ENCODE measurements at regions of chr18 and their contacts with region 1.

Region 1: DNA sequence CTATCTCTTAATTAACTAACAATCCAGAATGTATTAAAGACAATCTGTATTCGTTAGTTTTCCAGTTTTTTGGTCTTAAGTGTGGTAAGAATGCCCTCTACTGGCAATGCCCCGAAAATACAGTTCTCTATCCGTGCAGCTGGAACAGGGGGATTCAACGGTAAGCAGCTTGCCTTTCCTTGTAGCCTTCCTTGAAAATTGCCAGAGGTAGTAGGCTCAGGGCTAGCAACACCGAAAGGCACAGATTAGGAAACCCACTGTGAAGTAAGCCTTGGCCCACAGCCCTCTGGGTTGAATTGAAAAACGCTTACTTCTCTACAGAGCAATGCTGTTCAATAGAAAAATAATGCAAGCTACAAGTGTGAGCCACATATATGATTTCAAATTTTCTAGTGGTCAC is 17.1 kb upstream of the VPS4B start:
- DNase-seq: peak; percentile 59
- ATAC-seq: peak; percentile 60
- H3K4me3 Mint-ChIP-seq: no peak overlapping the region
- H3K27ac Mint-ChIP-seq: no peak overlapping the region
- H3K4me1 Mint-ChIP-seq: peaks cover 3% of the 10 kb centered on the region
- H3K27me3 Mint-ChIP-seq: peaks cover 21% of the 10 kb centered on the region

Region 2: GRCh38 chr18:63131106-63131958 is 308.0 kb before region 1 on chr18:
- CTCF ChIA-PET with region 1: interaction called, 11 read pairs
- POLR2A ChIA-PET with region 1: no interaction called
- DNase-seq: peak; percentile 73
- ATAC-seq: peak; percentile 56
- H3K4me3 Mint-ChIP-seq: no peak overlapping the region
- H3K27ac Mint-ChIP-seq: peak overlapping the region; percentile 70
- H3K4me1 Mint-ChIP-seq: peaks cover 52% of the 10 kb centered on the region
- H3K27me3 Mint-ChIP-seq: no peaks in the 10 kb centered on the region

Region 3: GRCh38 chr18:63339920-63340484 is 99.3 kb before region 1 on chr18:
- CTCF ChIA-PET with region 1: interaction called, 55 read pairs
- POLR2A ChIA-PET with region 1: no interaction called
- DNase-seq: peak; percentile 71
- ATAC-seq: peak; percentile 64
- H3K4me3 Mint-ChIP-seq: no peak overlapping the region
- H3K27ac Mint-ChIP-seq: no peak overlapping the region
- H3K4me1 Mint-ChIP-seq: peaks cover 3% of the 10 kb centered on the region
- H3K27me3 Mint-ChIP-seq: no peaks in the 10 kb centered on the region

Region 4: DNA sequence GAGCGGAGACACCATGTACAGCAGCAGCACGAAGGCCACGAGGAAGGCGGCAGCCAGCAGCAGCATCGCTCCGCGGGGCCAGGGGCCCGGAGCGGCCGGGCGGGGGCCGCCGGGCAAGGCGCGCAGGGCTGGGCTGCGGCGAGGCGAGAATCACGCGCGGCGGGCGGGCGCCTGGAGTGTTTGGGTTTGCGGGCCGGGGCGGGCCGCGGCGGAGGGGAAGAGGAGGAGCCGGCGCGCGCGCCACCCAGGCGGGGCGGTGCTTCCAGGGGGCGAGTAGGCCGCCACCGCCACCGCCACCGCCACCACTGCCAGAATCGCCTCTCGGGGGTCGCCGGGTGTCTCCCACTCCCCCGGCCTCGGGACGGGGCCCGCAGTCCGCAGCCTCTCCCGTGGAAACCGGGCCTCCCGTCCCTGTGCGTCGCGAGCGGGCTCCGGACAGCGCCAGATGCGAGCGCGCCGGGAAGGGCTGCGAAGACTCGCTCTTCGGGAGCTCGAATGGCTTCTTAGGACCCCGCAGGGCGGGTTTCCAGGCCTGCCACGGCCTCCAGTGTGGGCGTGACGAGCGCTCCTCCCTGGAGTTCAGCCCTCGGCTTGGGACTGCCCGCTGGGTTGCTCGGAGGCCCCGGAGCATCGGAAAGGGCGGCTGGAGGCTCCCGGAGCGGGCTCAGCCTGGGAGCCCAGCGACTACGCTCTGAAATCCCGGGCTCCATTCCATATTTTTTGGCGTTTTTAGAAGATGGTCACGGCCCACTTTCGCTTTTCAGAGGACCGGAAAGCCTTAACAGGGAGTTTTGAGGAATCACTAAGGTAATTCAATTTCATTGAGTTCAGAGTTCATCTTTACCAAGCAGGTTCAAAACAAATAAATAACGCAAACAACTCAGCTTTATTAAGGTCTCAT is 72.0 kb before region 1 on chr18 and contains the start of gene KDSR:
- CTCF ChIA-PET with region 1: interaction called, 26 read pairs
- POLR2A ChIA-PET with region 1: interaction called, 4 read pairs
- DNase-seq: peak; percentile 86
- ATAC-seq: peak; percentile 88
- H3K4me3 Mint-ChIP-seq: peak within 1 kb of the TSS; percentile 81
- H3K27ac Mint-ChIP-seq: peak within 1 kb of the TSS; percentile 86
- H3K4me1 Mint-ChIP-seq: peaks cover 39% of the 10 kb centered on the region
- H3K27me3 Mint-ChIP-seq: no peaks in the 10 kb centered on the region
- total RNA-seq, gene KDSR: 38.2 to 38.4 TPM

Region 5: DNA sequence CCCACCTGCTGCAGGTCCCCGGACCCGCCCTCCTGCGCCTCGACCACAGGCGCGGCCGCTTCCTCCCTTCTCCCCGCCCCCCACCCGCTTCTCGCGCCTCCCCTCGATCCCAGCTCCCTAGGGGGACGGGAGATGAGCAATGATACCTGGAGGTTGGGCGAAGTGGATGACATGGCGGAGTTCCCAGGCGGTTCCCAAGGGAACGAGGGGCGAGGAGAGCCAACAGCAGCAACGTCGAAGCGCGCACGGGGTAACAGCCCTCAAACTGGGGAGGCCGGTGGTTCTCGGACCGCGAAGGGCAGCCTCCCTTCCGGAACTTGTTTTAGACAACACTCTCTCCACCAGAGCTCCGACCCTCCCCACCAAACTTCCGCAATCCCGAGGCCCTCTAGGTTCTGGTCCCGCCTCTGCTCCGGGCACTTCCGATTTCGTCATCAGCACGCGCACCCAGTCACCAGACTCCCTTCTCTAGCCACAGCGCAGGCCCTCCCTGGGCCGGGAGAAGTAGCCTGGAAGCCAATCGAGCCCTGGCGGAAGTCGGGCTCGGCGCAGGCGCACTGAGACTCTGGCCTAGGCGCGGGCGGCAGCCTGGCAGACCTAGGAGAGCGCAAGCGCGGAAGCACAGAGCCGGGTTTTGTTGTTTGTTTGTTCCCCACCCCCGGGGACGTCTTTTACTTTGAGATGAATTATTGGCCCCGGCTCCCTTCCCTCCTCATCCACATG is 17.1 kb before region 1 on chr18 and contains the start of gene VPS4B:
- CTCF ChIA-PET with region 1: interaction called, 45 read pairs
- POLR2A ChIA-PET with region 1: interaction called, 3 read pairs
- DNase-seq: peak; percentile 100
- ATAC-seq: peak; percentile 95
- H3K4me3 Mint-ChIP-seq: peak within 1 kb of the TSS; percentile 98
- H3K27ac Mint-ChIP-seq: peak within 1 kb of the TSS; percentile 98
- H3K4me1 Mint-ChIP-seq: peaks cover 23% of the 10 kb centered on the region
- H3K27me3 Mint-ChIP-seq: peaks cover 4% of the 10 kb centered on the region
- total RNA-seq, gene VPS4B: 62.8 to 67.2 TPM

Measured in activated CD8-positive, alpha-beta T cell treated with anti-CD3 and anti-CD28 coated beads, Interleukin-2, amount 10 ng/mL, durations not matched to agents 7 days and 5 days (primary cell).